Posterior vena cava (tissue), 2 donors: ENCODE measurements at regions of chrX and their contacts with region 1.

Region 1: GRCh38 chrX:52574416-52575275 is 57.8 kb upstream of the XAGE1B start:
- DNase-seq: no peak

Region 2: DNA sequence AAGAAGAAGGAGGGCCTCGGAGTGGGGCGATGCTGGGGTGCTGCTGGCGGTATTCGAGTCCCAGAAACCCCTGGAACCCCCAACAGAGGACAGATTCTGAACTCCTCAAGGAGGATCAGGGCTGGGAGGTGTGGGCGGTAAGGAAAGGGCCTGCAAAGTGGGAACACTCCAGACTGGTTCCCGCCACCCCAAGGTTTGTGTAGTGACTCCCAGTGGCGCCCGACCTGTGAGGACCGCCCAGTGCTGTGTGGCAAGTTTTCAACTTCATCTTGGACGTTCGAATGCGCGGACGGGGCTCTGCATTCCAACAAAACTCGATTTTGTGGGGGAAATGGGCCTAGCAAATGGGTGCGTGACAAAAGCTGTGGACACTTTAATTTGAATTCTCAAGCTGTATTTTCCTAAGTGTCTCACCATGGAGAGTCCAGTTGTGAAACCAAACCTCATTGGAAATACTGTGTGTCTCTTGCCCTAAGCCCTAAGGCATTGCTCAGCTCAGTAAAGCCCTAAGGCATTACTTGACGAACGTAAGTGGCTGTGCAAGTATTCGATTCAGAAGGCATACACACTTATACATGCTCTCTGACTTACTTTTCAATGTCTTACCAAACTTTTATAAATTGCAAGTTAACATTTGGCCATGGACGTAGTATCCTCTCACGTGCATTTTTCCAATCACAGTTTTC is 30.4 kb before region 1 on chrX:
- intact Hi-C with region 1: no loop called
- DNase-seq: no peak

Region 3: GRCh38 chrX:52608961-52609360 is 34.3 kb after region 1 on chrX:
- intact Hi-C with region 1: loop called in 1 of 2 experiments (anchors 2 kb)
- DNase-seq: no peak